Activated naive CD4-positive, alpha-beta T cell treated with anti-CD3 and anti-CD28 coated beads for 36 hours (primary cell): ENCODE measurements at regions of chr2 and their contacts with region 1.

Region 1: GRCh38 chr2:201780674-201781581 is at the start of gene ALS2:
- DNase-seq: peak; percentile 96
- H3K4me3 Mint-ChIP-seq: peak within 1 kb of the TSS; percentile 86
- H3K27ac Mint-ChIP-seq: peak within 1 kb of the TSS; percentile 83
- H3K4me1 Mint-ChIP-seq: peaks cover 13% of the 10 kb centered on the region
- H3K27me3 Mint-ChIP-seq: peaks cover 3% of the 10 kb centered on the region
- total RNA-seq, gene ALS2: 9.4 to 11.2 TPM

Region 2: GRCh38 chr2:201432038-201432620 is 348.8 kb before region 1 on chr2:
- CTCF ChIA-PET with region 1: no interaction called
- intact Hi-C with region 1: loop called (anchors 5 kb)
- DNase-seq: no peak
- H3K4me3 Mint-ChIP-seq: peak overlapping the region; percentile 56
- H3K27ac Mint-ChIP-seq: peak overlapping the region; percentile 96
- H3K4me1 Mint-ChIP-seq: peaks cover 45% of the 10 kb centered on the region
- H3K27me3 Mint-ChIP-seq: no peaks in the 10 kb centered on the region

Region 3: DNA sequence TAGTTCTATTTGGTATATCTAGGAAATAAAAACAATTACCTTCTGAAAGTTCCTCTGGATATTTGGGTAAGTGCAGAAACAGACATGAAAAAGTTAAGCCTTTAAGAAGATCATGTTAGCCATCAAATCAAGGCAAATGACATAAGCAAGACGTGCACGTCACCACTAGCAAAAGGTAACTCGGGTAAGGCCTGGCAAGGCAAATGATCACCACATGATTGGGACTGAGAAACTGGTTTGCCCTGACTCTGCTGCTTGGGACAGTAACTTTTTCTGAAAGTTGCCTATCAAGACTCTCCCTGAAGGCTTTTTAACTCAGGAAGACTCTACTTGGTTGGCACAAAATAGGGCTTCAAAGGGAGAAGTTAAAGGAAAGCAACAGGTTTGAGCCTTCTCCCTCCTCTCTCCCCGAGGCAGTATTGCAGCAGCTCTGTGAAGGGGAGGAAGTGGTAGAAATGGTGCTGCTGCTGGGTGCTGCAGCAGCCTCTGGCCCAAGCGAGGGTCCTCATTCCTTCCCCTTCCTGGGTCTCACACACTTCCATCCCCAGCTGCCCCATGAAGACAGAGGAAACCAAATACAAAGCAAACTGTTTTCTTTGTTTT is 120.5 kb before region 1 on chr2:
- CTCF ChIA-PET with region 1: no interaction called
- intact Hi-C with region 1: no loop called
- DNase-seq: no peak
- H3K4me3 Mint-ChIP-seq: no peak overlapping the region
- H3K27ac Mint-ChIP-seq: no peak overlapping the region
- H3K4me1 Mint-ChIP-seq: no peaks in the 10 kb centered on the region
- H3K27me3 Mint-ChIP-seq: no peaks in the 10 kb centered on the region

Region 4: DNA sequence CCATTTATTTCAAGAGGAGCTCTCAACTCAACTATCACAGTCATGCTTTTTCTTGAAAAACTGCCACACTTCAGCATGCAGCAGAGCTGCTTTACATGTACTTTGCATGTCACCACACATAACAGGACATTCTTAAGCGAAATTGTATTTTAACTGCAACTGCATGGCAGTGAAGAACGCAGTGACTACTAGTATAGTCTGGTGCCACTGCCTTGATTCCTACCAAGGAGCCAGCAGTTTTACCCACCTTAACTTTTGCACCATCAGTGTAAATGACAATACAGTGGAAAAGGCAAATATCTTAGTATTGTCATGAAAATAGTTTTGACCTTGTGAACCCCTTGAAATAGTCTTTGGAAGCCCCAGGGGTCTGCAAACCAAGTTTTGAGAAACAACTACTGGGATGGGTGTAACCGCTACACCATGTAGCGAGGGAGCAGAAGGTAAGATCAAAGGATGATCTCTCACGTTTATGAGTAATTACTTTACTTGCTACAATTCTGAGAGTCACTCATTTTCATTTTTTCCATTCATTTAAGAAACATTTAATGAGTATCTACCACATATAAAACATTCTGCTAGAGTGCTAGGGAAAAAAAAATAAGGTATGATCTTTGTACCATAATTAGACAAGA is 50.2 kb before region 1 on chr2:
- CTCF ChIA-PET with region 1: interaction called, 4 read pairs
- intact Hi-C with region 1: loop called (anchors 1 kb)
- DNase-seq: peak; percentile 41
- H3K4me3 Mint-ChIP-seq: no peak overlapping the region
- H3K27ac Mint-ChIP-seq: peak overlapping the region; percentile 30
- H3K4me1 Mint-ChIP-seq: peaks cover 11% of the 10 kb centered on the region
- H3K27me3 Mint-ChIP-seq: no peaks in the 10 kb centered on the region

Region 5: GRCh38 chr2:201827621-201828020 is 46.7 kb after region 1 on chr2:
- CTCF ChIA-PET with region 1: no interaction called
- intact Hi-C with region 1: no loop called
- DNase-seq: no peak
- H3K4me3 Mint-ChIP-seq: no peak overlapping the region
- H3K27ac Mint-ChIP-seq: no peak overlapping the region
- H3K4me1 Mint-ChIP-seq: no peaks in the 10 kb centered on the region
- H3K27me3 Mint-ChIP-seq: no peaks in the 10 kb centered on the region

Region 6: GRCh38 chr2:201839727-201840126 is 58.8 kb after region 1 on chr2:
- CTCF ChIA-PET with region 1: no interaction called
- intact Hi-C with region 1: no loop called
- DNase-seq: no peak
- H3K4me3 Mint-ChIP-seq: no peak overlapping the region
- H3K27ac Mint-ChIP-seq: no peak overlapping the region
- H3K4me1 Mint-ChIP-seq: no peaks in the 10 kb centered on the region
- H3K27me3 Mint-ChIP-seq: no peaks in the 10 kb centered on the region